Activated CD4-positive, alpha-beta T cell treated with anti-CD3 and anti-CD28 coated beads for 36 hours (primary cell): ENCODE measurements at regions of chr19 and their contacts with region 1.

Region 1: GRCh38 chr19:1131738-1132551 is 28.2 kb downstream of the GPX4 start:
- DNase-seq: peak; percentile 96
- ATAC-seq: peak; percentile 60
- H3K4me3 Mint-ChIP-seq: peak overlapping the region; percentile 91
- H3K27ac Mint-ChIP-seq: peak overlapping the region; percentile 96
- H3K4me1 Mint-ChIP-seq: peaks cover 46% of the 10 kb centered on the region
- H3K27me3 Mint-ChIP-seq: no peaks in the 10 kb centered on the region

Region 2: DNA sequence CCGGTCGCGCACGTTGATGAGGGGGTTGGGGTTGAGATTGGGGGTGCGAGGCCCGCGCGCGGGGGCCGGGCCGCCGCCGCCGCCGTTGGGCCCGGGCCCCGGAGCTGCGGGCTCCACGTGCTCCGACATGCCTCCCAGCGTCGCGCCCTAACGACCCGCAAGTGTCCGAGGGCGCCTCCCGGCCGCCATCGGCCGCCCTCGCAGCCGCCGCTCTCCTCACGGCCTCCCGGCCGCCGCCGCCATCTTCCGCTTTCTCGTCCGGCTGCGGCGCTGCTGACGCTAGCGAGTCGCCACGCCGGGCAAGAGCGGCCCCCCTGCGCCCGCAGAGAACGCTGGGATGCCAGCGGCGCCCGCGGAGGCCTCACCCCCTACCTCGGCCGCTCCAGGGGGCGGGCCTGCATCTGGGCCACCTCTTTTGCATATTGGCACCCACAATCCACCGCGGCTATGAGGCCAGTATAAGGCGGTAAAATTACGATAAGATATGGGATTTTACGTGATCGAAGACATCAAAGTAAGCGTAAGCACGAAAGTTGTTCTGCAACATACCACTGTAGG is 111.0 kb before region 1 on chr19 and contains the start of gene TMEM259:
- CTCF ChIA-PET with region 1: no interaction called
- POLR2A ChIA-PET with region 1: interaction called, 3 read pairs
- intact Hi-C with region 1: loop called in 1 of 2 experiments (anchors 1 kb)
- DNase-seq: peak; percentile 99
- ATAC-seq: peak; percentile 90
- H3K4me3 Mint-ChIP-seq: peak within 1 kb of the TSS; percentile 94
- H3K27ac Mint-ChIP-seq: peak within 1 kb of the TSS; percentile 96
- H3K4me1 Mint-ChIP-seq: peaks cover 35% of the 10 kb centered on the region
- H3K27me3 Mint-ChIP-seq: no peaks in the 10 kb centered on the region
- total RNA-seq, gene TMEM259: 106 to 128 TPM

Region 3: DNA sequence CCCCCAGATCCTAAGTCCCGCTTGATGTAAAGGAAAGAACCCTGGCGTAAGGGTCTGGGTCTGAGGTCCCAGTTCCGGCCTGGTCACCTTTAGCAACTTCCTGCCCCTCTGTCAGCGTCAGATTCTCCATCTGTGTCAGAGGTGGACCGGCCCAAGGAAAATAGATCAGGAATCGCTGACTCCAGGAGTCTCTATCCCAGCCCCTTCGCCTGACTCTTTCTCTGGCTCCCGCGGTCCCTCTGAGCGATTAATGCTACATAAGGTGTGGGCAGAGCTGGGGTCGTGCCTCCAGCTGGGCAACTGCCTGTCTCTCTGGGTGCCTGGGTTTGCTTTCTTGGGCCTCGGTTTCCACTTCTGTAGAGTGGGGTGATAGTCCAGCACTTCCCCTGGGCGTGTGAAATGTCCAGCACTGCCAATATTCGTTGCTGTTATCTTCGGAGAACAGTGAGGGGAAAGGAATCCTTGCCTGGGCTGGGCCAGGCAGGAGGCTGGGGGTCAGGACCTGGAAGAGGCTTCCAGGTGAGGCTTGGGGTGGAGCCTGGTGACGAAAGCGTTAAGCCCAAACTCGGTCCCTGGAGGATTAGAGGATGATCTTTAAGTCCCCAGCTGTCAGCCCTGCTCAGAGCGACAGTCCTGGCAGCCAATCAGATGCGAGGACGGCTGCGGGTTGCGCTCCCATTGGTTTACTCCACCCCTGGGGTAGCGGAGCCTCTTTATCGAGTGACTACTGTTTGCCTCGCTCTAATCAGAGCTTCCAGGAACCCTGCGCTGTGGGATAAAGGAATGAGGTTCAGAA is 91.3 kb before region 1 on chr19:
- CTCF ChIA-PET with region 1: no interaction called
- POLR2A ChIA-PET with region 1: no interaction called
- intact Hi-C with region 1: no loop called
- DNase-seq: peak; percentile 95
- ATAC-seq: peak; percentile 67
- H3K4me3 Mint-ChIP-seq: peak overlapping the region; percentile 86
- H3K27ac Mint-ChIP-seq: peak overlapping the region; percentile 59
- H3K4me1 Mint-ChIP-seq: peaks cover 34% of the 10 kb centered on the region
- H3K27me3 Mint-ChIP-seq: no peaks in the 10 kb centered on the region

Region 4: GRCh38 chr19:1094975-1095701 is 36.8 kb before region 1 on chr19 and contains the start of gene POLR2E:
- CTCF ChIA-PET with region 1: no interaction called
- POLR2A ChIA-PET with region 1: no interaction called
- intact Hi-C with region 1: loop called (anchors 1 to 5 kb)
- DNase-seq: peak; percentile 99
- ATAC-seq: peak; percentile 89
- H3K4me3 Mint-ChIP-seq: peak within 1 kb of the TSS; percentile 88
- H3K27ac Mint-ChIP-seq: peak within 1 kb of the TSS; percentile 93
- H3K4me1 Mint-ChIP-seq: peaks cover 49% of the 10 kb centered on the region
- H3K27me3 Mint-ChIP-seq: no peaks in the 10 kb centered on the region
- total RNA-seq, gene POLR2E: 171 to 229 TPM

Region 5: GRCh38 chr19:1163734-1164471 is 32.0 kb after region 1 on chr19:
- CTCF ChIA-PET with region 1: no interaction called
- POLR2A ChIA-PET with region 1: no interaction called
- intact Hi-C with region 1: no loop called
- DNase-seq: no peak
- ATAC-seq: no peak
- H3K4me3 Mint-ChIP-seq: no peak overlapping the region
- H3K27ac Mint-ChIP-seq: no peak overlapping the region
- H3K4me1 Mint-ChIP-seq: peaks cover 7% of the 10 kb centered on the region
- H3K27me3 Mint-ChIP-seq: no peaks in the 10 kb centered on the region

Region 6: GRCh38 chr19:1173845-1174809 is 42.2 kb after region 1 on chr19 and contains the start of gene SBNO2:
- CTCF ChIA-PET with region 1: interaction called, 4 read pairs
- POLR2A ChIA-PET with region 1: no interaction called
- intact Hi-C with region 1: loop called (anchors 1 to 5 kb)
- DNase-seq: peak; percentile 96
- ATAC-seq: peak; percentile 93
- H3K4me3 Mint-ChIP-seq: peak within 1 kb of the TSS; percentile 89
- H3K27ac Mint-ChIP-seq: peak within 1 kb of the TSS; percentile 92
- H3K4me1 Mint-ChIP-seq: peaks cover 34% of the 10 kb centered on the region
- H3K27me3 Mint-ChIP-seq: no peaks in the 10 kb centered on the region
- total RNA-seq, gene SBNO2: 108 to 113 TPM

Region 7: GRCh38 chr19:1249298-1249989 is 117.5 kb after region 1 on chr19:
- CTCF ChIA-PET with region 1: interaction called, 3 read pairs
- POLR2A ChIA-PET with region 1: no interaction called
- intact Hi-C with region 1: loop called in 1 of 2 experiments (anchors 2 kb)
- DNase-seq: peak; percentile 97
- ATAC-seq: peak; percentile 53
- H3K4me3 Mint-ChIP-seq: peak overlapping the region; percentile 73
- H3K27ac Mint-ChIP-seq: no peak overlapping the region
- H3K4me1 Mint-ChIP-seq: peaks cover 9% of the 10 kb centered on the region
- H3K27me3 Mint-ChIP-seq: no peaks in the 10 kb centered on the region

Region 8: GRCh38 chr19:1507763-1508509 is 376.0 kb after region 1 on chr19:
- CTCF ChIA-PET with region 1: no interaction called
- POLR2A ChIA-PET with region 1: no interaction called
- intact Hi-C with region 1: no loop called
- DNase-seq: peak; percentile 95
- ATAC-seq: peak; percentile 87
- H3K4me3 Mint-ChIP-seq: peak overlapping the region; percentile 73
- H3K27ac Mint-ChIP-seq: peak overlapping the region; percentile 88
- H3K4me1 Mint-ChIP-seq: peaks cover 16% of the 10 kb centered on the region
- H3K27me3 Mint-ChIP-seq: no peaks in the 10 kb centered on the region